Activated CD8-positive, alpha-beta T cell treated with anti-CD3 and anti-CD28 coated beads for 36 hours (primary cell): ENCODE measurements at regions of chr12 and their contacts with region 1.

Region 1: DNA sequence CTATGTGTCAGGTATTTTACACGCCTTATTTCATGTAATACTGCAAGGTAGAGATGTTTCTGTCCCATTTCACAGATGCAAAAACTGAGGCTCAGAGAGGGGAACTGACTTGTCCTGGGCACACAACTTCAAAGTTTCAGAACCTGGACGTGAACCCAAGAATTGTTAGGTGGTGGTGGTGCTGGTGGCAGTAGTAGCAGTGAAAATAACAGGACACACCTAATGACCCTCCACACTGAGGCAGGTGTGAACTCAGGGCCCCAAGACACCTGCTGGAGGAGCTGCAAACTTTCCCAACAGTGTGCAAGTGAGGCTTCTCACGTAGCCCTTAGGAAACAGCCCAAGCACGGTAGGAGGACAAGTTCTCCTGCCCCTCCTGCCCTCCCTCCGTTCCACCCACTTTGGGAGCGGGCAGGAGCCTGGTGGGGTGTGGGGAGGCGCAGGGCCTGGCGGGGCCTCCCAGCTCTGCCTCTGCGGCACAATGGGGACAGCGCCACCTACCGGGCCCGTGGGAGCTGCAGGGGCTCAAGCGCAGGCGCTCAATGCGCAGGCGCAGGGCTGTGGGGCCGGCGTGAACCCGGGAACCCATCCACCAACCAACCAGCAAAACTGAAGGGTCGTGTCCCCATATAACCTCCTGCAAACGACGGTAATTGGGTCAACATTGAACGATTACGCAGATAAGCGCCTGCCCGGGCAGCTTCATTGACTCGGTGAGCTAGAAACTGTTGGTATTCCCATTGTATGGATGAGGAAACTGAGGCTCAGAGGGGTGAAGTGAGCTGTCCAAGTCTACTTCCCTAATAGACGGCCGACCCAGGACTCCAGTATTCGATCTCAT is 12.0 kb upstream of the TRPV4 start:
- DNase-seq: peak; percentile 93
- ATAC-seq: peak; percentile 99
- H3K4me3 Mint-ChIP-seq: peak overlapping the region; percentile 18
- H3K27ac Mint-ChIP-seq: no peak overlapping the region
- H3K4me1 Mint-ChIP-seq: peaks cover 6% of the 10 kb centered on the region
- H3K27me3 Mint-ChIP-seq: no peaks in the 10 kb centered on the region
- CTCF ChIP-seq: peak; percentile 100

Region 2: DNA sequence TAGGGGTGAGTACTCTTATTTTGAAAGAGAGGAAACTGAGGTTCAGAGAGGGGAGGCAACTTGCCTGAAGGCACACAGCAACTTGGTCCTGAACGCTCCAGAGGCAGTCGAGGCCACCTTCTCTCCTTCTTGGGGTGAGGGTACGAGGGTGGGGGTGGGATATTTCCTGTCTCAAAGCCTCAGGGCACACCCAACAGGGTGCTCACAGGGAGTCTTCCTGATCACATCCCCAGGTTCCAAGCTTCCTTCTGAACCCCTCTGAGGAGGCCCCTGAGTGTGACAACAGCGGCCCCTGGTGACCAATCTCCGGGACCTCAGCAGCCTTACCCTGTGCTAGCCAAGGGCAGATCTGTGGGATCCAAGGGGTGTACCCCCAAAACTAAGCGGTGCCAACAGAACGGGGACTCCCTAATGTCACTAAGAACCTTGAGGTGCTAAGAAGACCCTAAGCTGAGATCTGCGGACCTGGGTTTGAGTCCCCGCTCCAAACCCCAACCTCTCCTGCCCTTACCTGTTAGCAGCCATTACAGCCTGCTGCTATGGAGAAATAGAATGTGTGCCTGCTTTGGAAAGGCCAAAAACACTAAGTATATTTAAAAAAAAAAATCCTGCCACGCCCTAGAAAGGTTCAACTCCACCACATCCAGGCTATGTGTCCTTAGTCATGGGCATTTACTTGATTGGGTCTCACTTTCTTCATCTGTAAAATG is 69.9 kb before region 1 on chr12:
- CTCF ChIA-PET with region 1: interaction called, 11 read pairs
- POLR2A ChIA-PET with region 1: no interaction called
- intact Hi-C with region 1: no loop called
- DNase-seq: peak; percentile 83
- ATAC-seq: peak; percentile 80
- H3K4me3 Mint-ChIP-seq: no peak overlapping the region
- H3K27ac Mint-ChIP-seq: no peak overlapping the region
- H3K4me1 Mint-ChIP-seq: peaks cover 5% of the 10 kb centered on the region
- H3K27me3 Mint-ChIP-seq: no peaks in the 10 kb centered on the region
- CTCF ChIP-seq: peak; percentile 78

Region 3: DNA sequence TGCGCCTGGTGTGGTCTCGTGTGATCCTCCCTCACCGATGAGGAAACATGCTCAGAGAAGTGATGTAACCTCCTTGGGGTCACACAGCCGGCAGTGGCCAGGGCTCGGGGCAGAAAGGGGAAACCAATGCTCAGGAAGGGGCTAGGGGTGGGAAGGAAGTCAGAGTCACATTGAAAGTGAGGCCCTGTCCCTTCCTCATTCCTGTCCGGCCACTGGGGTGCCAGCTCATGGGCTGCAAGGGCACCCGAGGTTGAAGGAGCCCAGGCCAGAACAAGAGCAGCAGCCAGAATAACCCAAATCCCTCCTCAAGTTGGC is 17.0 kb before region 1 on chr12:
- CTCF ChIA-PET with region 1: interaction called, 21 read pairs
- POLR2A ChIA-PET with region 1: interaction called, 5 read pairs
- intact Hi-C with region 1: no loop called
- DNase-seq: no peak
- ATAC-seq: no peak
- H3K4me3 Mint-ChIP-seq: no peak overlapping the region
- H3K27ac Mint-ChIP-seq: no peak overlapping the region
- H3K4me1 Mint-ChIP-seq: no peaks in the 10 kb centered on the region
- H3K27me3 Mint-ChIP-seq: peaks cover 14% of the 10 kb centered on the region
- CTCF ChIP-seq: no peak

Region 4: DNA sequence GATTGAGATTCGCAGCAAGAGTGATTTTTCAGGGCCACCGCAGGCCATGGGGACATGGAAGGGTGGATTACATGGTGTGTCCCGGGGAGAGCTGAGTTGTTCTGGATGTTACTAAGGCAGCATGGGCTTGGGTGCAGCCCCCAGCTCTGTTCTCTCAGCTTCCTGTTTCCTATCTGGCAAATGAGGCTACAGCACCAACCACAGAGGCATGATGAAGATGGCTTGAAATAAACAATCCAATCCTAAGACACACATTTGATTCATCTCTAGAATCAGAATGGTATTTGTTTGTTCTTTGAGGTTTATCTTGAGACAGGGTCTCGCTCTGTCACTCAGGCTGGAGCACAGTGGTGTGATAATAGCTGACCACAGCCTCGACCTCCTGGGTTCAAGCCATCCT is 13.6 kb after region 1 on chr12:
- CTCF ChIA-PET with region 1: interaction called, 27 read pairs
- POLR2A ChIA-PET with region 1: interaction called, 3 read pairs
- intact Hi-C with region 1: no loop called
- DNase-seq: no peak
- ATAC-seq: peak; percentile 37
- H3K4me3 Mint-ChIP-seq: no peak overlapping the region
- H3K27ac Mint-ChIP-seq: peak overlapping the region; percentile 56
- H3K4me1 Mint-ChIP-seq: peaks cover 6% of the 10 kb centered on the region
- H3K27me3 Mint-ChIP-seq: no peaks in the 10 kb centered on the region
- CTCF ChIP-seq: no peak

Region 5: GRCh38 chr12:109870648-109871047 is 25.4 kb after region 1 on chr12:
- CTCF ChIA-PET with region 1: interaction called, 15 read pairs
- POLR2A ChIA-PET with region 1: no interaction called
- intact Hi-C with region 1: no loop called
- DNase-seq: no peak
- ATAC-seq: no peak
- H3K4me3 Mint-ChIP-seq: no peak overlapping the region
- H3K27ac Mint-ChIP-seq: no peak overlapping the region
- H3K4me1 Mint-ChIP-seq: peaks cover 19% of the 10 kb centered on the region
- H3K27me3 Mint-ChIP-seq: no peaks in the 10 kb centered on the region
- CTCF ChIP-seq: no peak

Region 6: GRCh38 chr12:109888179-109889020 is 43.2 kb after region 1 on chr12:
- CTCF ChIA-PET with region 1: interaction called, 11 read pairs
- POLR2A ChIA-PET with region 1: no interaction called
- intact Hi-C with region 1: no loop called
- DNase-seq: peak; percentile 44
- ATAC-seq: peak; percentile 71
- H3K4me3 Mint-ChIP-seq: peak overlapping the region; percentile 46
- H3K27ac Mint-ChIP-seq: peak overlapping the region; percentile 90
- H3K4me1 Mint-ChIP-seq: peaks cover 36% of the 10 kb centered on the region
- H3K27me3 Mint-ChIP-seq: no peaks in the 10 kb centered on the region
- CTCF ChIP-seq: no peak